Left cardiac atrium (tissue), 4 donors: ENCODE measurements at regions of chr2 and their contacts with region 1.

Region 1: GRCh38 chr2:133886735-133887660 is 318.7 kb upstream of the NCKAP5 start:
- DNase-seq: peak; percentile 74
- ATAC-seq: peak; percentile 74 to 83

Region 2: GRCh38 chr2:133667085-133667484 is 219.9 kb before region 1 on chr2:
- intact Hi-C with region 1: no loop called
- DNase-seq: no peak
- ATAC-seq: no peak

Region 3: GRCh38 chr2:134104754-134105153 is 217.8 kb after region 1 on chr2:
- intact Hi-C with region 1: loop called in 1 of 2 experiments (anchors 10 kb)
- DNase-seq: no peak
- ATAC-seq: no peak

Region 4: DNA sequence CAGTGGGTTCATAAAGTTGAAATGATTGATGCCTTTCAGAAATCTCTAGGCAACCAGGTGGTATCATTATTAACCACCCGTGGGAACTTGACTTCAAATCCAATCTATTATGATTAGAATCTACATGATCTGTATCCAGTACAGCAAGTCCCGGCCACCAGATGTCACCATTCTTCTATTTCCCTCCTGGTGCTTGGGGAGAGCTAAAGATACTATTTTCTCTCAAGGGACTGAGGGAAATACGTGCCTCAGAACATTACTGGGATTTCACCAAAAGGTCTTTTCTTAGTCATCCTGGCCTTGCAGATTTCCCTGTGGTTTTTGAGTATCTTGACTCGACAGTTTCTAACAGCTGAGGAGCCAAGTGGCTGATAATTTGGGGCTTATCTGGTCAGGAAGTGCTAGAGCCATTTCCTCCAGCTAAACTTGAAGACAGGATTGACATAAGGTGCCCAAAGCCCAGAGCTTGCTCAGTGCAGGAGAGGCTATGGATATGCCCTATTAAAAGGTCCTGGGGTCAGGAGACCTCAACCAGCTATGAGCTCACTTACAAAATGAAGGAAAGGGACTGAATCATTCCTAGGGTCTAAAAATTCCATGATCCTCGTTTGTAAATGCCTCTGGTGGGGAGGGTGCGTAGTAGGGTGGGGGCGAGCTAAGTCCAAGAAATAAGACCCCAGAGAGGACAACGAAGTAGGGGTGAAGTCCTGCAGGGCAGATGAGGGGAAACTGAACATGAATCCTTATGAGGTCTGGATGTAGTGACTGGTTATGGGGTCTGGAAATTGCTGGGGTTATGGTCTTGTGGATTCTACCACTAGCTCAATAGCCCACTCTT is 231.5 kb after region 1 on chr2:
- intact Hi-C with region 1: loop called in 1 of 2 experiments (anchors 5 kb)
- DNase-seq: peak; percentile 87
- ATAC-seq: peak; percentile 45 to 51

Region 5: GRCh38 chr2:134245340-134245984 is 358.5 kb after region 1 on chr2:
- intact Hi-C with region 1: loop called in 1 of 2 experiments (anchors 10 kb)
- DNase-seq: peak; percentile 85
- ATAC-seq: peak; percentile 60 to 75

Region 6: DNA sequence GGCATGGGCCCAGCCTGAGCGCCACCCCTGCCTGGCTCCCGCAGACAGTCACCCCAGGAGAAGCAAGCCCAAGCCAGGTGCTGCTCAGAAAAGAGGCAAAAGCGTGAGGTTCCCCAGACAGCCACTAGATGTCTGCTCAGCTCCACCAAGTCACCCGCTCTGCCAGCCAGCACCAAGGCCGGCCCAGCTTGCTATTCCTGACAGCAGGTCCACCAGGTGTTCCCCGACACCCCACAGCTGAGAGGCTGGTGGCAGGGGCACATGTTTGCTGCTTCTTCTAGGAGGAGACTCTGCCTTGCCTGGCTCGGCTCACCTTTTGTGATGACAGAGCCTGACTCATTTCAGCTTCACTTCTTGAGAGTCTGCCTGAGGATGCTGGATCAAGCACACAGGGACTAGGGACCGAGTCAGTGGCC is 573.6 kb after region 1 on chr2:
- intact Hi-C with region 1: loop called in 1 of 2 experiments (anchors 10 kb)
- DNase-seq: peak; percentile 60
- ATAC-seq: peak; percentile 77 to 82

Region 7: DNA sequence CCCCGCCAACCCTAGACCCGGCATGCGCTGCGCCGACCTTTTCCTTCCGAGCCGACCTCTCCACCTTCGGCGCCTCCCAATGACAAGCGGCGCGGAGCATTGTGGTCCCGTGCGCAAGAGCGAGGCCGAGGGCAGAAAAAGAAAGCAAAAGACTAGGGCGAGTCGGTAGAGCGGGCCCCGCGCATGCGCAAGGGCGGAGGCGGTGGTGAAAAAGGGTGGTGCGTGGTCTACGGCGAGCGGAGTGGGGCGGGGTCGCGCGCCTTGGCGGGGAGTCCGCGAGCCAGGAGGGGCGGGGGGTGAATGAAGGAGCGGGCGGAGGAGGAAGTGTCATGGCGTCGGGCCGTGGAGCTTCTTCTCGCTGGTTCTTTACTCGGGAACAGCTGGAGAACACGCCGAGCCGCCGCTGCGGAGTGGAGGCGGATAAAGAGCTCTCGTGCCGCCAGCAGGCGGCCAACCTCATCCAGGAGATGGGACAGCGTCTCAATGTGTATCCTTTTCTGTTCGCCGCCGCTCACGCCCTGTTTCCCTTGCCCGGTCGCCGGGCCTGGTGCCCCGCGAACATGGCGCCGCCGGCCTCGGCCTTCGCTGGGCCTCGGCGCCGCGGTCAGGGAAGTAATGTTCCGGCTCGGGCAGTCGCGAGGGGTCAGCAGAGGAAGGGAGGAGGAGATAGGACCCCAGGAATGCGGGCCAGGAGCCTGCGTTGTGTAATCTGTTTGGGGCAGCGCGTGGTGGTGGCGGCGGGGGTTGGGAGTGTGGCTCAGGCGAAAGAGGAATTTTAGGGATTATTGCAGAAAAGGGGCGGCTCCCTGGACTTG is 1031.7 kb after region 1 on chr2 and contains the start of gene CCNT2:
- intact Hi-C with region 1: loop called in 1 of 2 experiments (anchors 10 kb)
- DNase-seq: peak; percentile 99
- ATAC-seq: peak; percentile 94 to 96
- total RNA-seq, gene CCNT2: 20.3 to 24.2 TPM